ENCODE measurements at regions of chr19 and their contacts with region 1.

Region 1: GRCh38 chr19:54517483-54517882 is 14.9 kb downstream of the LAIR2 start:
- DNase-seq: peak; percentile 65
- H3K4me3 Mint-ChIP-seq: no peak overlapping the region
- H3K27ac Mint-ChIP-seq: no peak overlapping the region
- H3K4me1 Mint-ChIP-seq: peaks cover 42% of the 10 kb centered on the region
- H3K27me3 Mint-ChIP-seq: peaks cover 7% of the 10 kb centered on the region

Region 2: DNA sequence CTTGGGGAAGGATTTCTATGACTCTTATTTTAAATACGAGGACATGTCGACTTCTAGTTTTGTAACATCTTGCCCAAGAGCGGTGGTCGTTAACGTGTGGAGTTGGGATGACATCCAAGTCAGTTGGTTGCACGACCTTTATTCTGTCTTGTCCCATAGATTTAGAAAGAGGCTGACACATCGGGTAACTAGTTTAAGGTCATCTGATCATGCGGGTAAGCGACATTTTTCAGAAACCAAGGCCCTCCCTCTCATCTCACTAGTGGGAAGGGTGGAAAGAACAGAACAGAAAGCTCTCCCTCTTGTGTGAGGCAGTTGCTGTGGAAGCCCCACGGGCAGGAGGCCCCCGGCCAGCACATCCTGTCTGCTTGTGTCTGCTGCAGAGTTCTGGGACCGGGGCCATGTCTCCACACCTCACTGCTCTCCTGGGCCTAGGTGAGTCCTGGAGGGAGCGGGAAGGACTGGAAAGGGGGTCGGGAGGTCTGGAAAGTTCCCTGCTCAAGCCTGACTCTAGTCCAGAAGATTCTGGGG is 14.9 kb before region 1 on chr19 and contains the start of gene LAIR2:
- intact Hi-C with region 1: loop called (anchors 1 kb)
- DNase-seq: no peak
- H3K4me3 Mint-ChIP-seq: peak within 1 kb of the TSS; percentile 82
- H3K27ac Mint-ChIP-seq: peak within 1 kb of the TSS; percentile 78
- H3K4me1 Mint-ChIP-seq: peaks cover 40% of the 10 kb centered on the region
- H3K27me3 Mint-ChIP-seq: peaks cover 11% of the 10 kb centered on the region
- total RNA-seq, gene LAIR2: 76.8 and 77.7 TPM in 2 replicates

Region 3: GRCh38 chr19:54532528-54532927 is 15.0 kb after region 1 on chr19:
- intact Hi-C with region 1: loop called (anchors 2 kb)
- DNase-seq: peak; percentile 30
- H3K4me3 Mint-ChIP-seq: peak overlapping the region; percentile 67
- H3K27ac Mint-ChIP-seq: peak overlapping the region; percentile 39
- H3K4me1 Mint-ChIP-seq: peaks cover 58% of the 10 kb centered on the region
- H3K27me3 Mint-ChIP-seq: peaks cover 6% of the 10 kb centered on the region

Measured in activated T-helper 2 cell treated with anti-CD3 and anti-CD28 coated beads, Interferon-gamma antibody, Interleukin-2, Interleukin-4, amounts not matched to agents 10 μg/mL and 5 μg/mL and 100 μg/mL, durations not matched to agents 14 hours and 24 hours and 36 hours (primary cell).